Ascending aorta (tissue), 2 donors: ENCODE measurements at regions of chr7 and their contacts with region 1.

Region 1: DNA sequence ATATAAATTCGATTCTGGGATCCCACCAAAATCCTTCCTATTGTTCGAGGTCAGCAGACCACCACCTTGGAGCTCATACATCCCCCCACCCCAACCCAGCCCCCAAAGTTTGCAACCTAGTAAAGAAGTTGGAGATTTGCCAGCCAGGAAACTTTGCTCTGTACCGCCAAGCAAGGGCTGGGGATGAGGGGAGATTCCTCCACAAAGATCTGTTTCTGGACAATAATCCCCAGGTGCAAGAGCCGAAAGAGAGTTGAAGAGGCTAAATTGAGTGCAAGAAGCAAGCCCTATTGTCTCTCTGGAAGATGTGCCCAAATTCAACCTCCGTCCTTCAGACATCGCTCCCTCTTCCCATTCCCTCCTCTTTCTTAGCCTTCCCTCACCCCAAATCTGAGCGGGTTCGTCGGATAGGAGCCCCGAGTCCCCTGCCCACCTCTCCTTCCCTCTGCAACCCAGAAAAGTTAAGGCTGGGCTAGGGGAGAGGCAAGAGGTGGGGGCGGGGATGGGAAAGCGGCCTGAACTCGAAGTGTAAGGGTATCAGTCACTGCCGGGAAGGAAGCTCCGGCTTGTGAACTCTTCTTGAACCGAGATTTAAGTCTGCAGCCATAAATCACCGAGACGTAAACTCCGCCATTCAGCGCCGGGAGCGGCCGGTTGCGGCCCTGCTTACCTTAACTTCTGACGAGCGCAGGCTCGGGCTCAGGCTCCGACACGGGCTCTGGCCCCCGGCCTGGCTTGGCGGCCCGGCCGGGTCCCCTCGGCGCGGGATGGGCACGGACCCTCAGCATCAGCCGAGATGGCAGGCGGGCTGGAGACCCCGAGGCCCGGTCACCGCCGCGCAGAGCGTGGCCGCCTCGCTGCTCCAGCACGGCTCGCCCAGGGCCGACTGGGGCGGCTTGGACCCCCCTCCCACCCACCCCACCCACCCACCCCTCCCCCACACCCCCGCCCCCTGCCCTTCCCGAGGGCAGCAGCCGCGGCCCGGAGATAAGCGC is 10.8 kb upstream of the HOXA2 start:
- DNase-seq: no peak
- H3K4me3 ChIP-seq: peak overlapping the region; percentile 63 to 81
- H3K27ac ChIP-seq: peak overlapping the region; percentile 89 to 97
- H3K4me1 ChIP-seq: peaks cover 8 to 15% of the 10 kb centered on the region in 2 donors
- H3K27me3 ChIP-seq: no peaks in the 10 kb centered on the region
- CTCF ChIP-seq: no peak

Region 2: GRCh38 chr7:25857376-25857921 is 1255.8 kb before region 1 on chr7:
- intact Hi-C with region 1: loop called (anchors 2 kb)
- DNase-seq: no peak
- H3K4me3 ChIP-seq: peak overlapping the region; percentile 50 to 73
- H3K27ac ChIP-seq: peak overlapping the region; percentile 54 to 61
- H3K4me1 ChIP-seq: peaks cover 2 to 4% of the 10 kb centered on the region in 2 donors
- H3K27me3 ChIP-seq: peaks cover 16% of the 10 kb centered on the region
- CTCF ChIP-seq: no peak

Region 3: DNA sequence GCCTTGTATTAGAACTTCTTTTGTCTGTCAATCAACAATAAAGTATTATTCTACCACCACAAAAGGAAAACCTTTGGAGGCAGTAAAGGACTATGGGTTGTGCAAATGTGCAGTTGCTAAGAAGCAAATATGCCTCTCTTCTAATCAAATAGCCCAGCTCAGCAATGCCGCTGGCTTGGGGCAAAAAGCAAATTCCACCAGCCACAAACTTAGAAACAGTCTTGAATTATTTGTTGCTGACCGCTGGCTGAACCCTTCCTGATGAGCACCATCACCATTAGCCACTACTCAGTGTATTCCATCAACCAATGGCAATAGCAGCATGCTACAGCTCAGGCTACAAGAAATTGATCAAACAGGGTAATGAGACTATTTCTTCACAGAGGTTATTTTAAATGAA is 299.8 kb before region 1 on chr7:
- intact Hi-C with region 1: no loop called
- DNase-seq: no peak
- H3K4me3 ChIP-seq: no peak overlapping the region
- H3K27ac ChIP-seq: no peak overlapping the region
- H3K4me1 ChIP-seq: no peaks in the 10 kb centered on the region
- H3K27me3 ChIP-seq: no peaks in the 10 kb centered on the region
- CTCF ChIP-seq: no peak

Region 4: DNA sequence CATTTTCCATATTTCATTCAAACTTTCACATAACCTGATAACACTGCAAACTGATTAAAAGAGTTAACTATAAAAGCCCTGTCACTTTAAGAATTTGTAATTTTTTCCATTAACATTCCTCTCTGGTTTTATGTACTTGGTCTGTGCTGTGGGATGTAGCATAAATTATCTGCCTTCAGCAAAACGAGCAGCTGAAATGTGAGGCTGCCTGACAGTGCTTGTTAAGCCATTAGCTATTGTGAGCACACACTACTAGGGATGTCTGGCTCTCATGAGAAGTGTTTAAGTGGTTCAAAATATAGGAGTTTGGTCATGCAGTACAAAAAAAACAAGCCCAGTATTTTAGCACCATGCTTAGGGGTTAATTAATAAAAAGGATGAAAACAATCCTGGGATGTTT is 80.4 kb before region 1 on chr7:
- intact Hi-C with region 1: no loop called
- DNase-seq: no peak
- H3K4me3 ChIP-seq: no peak overlapping the region
- H3K27ac ChIP-seq: peak overlapping the region in 1 of 2 donors; percentile 67
- H3K4me1 ChIP-seq: peaks cover 0 to 8% of the 10 kb centered on the region in 2 donors
- H3K27me3 ChIP-seq: no peaks in the 10 kb centered on the region
- CTCF ChIP-seq: no peak

Region 5: DNA sequence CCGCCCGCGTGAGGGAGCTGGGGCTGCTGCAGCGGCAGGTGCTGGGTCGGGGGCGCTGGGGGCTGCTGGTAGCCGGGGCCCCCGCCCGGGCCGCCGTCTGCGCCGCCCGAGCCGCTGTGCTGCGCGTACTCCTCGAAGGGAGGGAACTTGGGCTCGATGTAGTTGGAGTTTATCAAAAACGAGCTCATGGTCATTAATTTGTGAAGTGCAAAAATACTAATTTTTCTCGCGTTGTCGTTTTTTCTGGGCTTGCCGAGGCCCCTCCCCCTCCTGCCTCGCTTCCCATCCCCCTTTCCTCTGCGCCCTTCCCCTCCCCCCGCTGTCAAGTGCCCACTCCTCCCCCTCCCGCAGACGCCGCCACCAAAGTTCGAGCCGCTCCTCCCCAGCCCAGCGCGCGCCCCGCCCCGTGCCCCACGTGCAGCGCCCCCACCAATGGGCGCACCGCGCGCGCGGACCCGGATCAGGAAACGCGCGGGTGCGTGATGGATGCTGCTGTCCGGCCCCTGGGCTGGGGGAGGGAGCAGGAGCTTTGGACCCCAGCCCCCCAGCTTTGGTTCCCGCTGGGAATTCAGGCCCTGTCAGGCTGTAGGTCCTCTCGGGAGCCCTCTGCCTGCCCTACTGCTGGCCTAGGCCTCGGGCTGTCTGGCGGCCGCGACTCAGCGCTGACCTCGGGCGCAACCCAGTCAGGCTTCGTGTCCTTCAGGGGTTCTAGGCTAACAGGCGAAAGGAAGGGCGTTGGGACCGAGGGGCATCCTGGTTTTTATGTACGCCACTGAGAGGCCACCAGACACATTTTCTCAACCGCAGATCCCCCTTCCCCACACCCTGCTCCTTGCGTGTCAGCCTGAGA is 17.5 kb after region 1 on chr7 and contains the start of gene HOXA4:
- intact Hi-C with region 1: loop called (anchors 2 kb)
- DNase-seq: peak; percentile 62 to 96
- H3K4me3 ChIP-seq: peak within 1 kb of the TSS; percentile 87
- H3K27ac ChIP-seq: peak within 1 kb of the TSS; percentile 86 to 89
- H3K4me1 ChIP-seq: peaks cover 0 to 2% of the 10 kb centered on the region in 2 donors
- H3K27me3 ChIP-seq: no peaks in the 10 kb centered on the region
- CTCF ChIP-seq: no peak
- total RNA-seq, gene HOXA4: 2.1 TPM

Region 6: GRCh38 chr7:28408960-28409715 is 1295.9 kb after region 1 on chr7:
- intact Hi-C with region 1: loop called (anchors 10 kb)
- DNase-seq: peak; percentile 91 to 99
- H3K4me3 ChIP-seq: peak overlapping the region; percentile 59 to 86
- H3K27ac ChIP-seq: peak overlapping the region; percentile 89 to 91
- H3K4me1 ChIP-seq: peaks cover 6 to 27% of the 10 kb centered on the region in 2 donors
- H3K27me3 ChIP-seq: no peaks in the 10 kb centered on the region
- CTCF ChIP-seq: no peak